Activated CD4-positive, alpha-beta T cell treated with anti-CD3 and anti-CD28 coated beads, Interleukin-2, amount 10 ng/mL, durations not matched to agents 24 days and 14 days (primary cell): ENCODE measurements at regions of chr6 and their contacts with region 1.

Region 1: DNA sequence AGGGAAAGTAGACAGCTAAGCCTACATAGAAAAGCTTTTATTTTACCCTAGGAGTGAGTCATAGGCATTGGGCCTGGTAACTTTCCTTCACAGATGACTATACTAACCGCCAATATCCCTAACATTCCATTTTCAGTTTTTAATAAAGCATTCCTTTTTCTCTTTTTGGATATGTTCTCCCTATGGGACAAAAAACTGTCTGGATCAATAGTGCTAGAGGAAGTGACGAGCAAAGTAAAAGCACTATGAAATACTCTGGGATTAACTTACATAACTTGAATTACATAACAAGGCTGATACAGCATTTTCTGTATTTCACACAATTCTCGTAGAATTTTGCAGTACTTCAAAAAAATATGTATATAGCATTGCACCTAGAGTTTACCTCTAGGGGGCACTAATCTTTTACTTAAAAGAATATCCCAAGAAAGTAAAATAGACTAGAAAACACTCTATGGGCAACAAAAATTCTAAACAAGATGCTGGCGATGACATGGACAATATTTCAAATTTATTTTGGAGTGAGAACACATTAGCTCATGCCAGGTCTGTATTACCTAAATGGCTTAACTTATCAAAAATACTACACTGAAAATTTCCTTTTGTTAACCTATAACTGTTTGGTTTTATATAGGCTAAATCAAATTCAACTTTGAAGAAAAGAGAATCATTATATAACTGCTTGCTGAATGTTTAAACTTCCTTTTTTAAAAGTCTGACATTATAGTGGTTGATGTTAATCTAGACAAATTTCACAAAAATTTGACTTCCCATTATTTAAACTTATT is 66.3 kb upstream of the DST start:
- DNase-seq: peak; percentile 42
- H3K4me3 Mint-ChIP-seq: no peak overlapping the region
- H3K27ac Mint-ChIP-seq: no peak overlapping the region
- H3K4me1 Mint-ChIP-seq: no peaks in the 10 kb centered on the region
- H3K27me3 Mint-ChIP-seq: peaks cover 8% of the 10 kb centered on the region

Region 2: GRCh38 chr6:56451165-56451739 is 257.8 kb before region 1 on chr6:
- intact Hi-C with region 1: no loop called
- DNase-seq: no peak
- H3K4me3 Mint-ChIP-seq: no peak overlapping the region
- H3K27ac Mint-ChIP-seq: no peak overlapping the region
- H3K4me1 Mint-ChIP-seq: no peaks in the 10 kb centered on the region
- H3K27me3 Mint-ChIP-seq: no peaks in the 10 kb centered on the region

Region 3: GRCh38 chr6:56757588-56757984 is 48.6 kb after region 1 on chr6:
- intact Hi-C with region 1: loop called (anchors 1 kb)
- DNase-seq: no peak
- H3K4me3 Mint-ChIP-seq: no peak overlapping the region
- H3K27ac Mint-ChIP-seq: no peak overlapping the region
- H3K4me1 Mint-ChIP-seq: peaks cover 5% of the 10 kb centered on the region
- H3K27me3 Mint-ChIP-seq: no peaks in the 10 kb centered on the region

Region 4: DNA sequence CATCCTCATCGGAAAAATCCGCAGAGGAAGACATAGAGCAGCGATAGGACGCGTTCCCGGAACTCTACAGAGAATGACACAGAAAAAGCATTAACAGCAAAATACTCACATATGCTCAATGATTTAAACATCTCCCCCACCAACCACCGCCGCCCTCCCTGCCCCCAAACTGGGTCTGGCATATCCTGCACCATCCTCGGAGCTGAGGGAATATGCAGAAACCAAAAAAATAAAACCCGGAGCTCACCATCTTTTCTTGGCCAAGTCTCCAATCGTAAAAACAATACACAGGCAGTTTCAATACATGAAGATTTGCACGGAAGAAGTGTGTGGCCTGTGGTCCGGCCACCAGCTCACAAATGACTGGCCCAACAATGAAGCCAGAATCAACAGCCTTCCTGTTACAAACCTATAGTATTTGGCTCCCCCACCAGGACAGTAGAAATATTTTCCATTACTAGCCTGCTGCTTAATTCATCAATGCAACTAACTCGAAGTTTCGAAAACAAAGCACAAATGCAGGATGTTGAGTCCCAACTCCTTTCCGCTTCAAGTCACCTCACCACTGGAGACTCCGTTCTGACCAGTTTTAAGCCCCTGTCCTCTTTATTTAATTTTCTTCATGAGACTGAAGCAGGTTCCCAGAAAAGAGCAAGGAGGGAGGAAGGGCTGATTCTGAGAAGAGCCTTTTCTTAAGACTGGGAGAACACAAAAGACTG is 142.7 kb after region 1 on chr6:
- intact Hi-C with region 1: loop called (anchors 1 kb)
- DNase-seq: peak; percentile 83
- H3K4me3 Mint-ChIP-seq: peak overlapping the region; percentile 85
- H3K27ac Mint-ChIP-seq: peak overlapping the region; percentile 81
- H3K4me1 Mint-ChIP-seq: peaks cover 25% of the 10 kb centered on the region
- H3K27me3 Mint-ChIP-seq: peaks cover 23% of the 10 kb centered on the region